ENCODE measurements at regions of chr6 and their contacts with region 1.

Region 1: GRCh38 chr6:30102970-30103874 is 9.7 kb downstream of the TRIM31 start:
- DNase-seq: peak; percentile 88
- H3K4me3 ChIP-seq: peak overlapping the region; percentile 43
- H3K4me3 Mint-ChIP-seq: peak overlapping the region; percentile 89
- H3K27ac Mint-ChIP-seq: peak overlapping the region; percentile 75
- H3K4me1 ChIP-seq: peaks cover 21% of the 10 kb centered on the region
- H3K4me1 Mint-ChIP-seq: peaks cover 27% of the 10 kb centered on the region
- H3K27me3 ChIP-seq: no peaks in the 10 kb centered on the region
- H3K27me3 Mint-ChIP-seq: no peaks in the 10 kb centered on the region
- CTCF ChIP-seq: peak; percentile 81 to 87

Region 2: DNA sequence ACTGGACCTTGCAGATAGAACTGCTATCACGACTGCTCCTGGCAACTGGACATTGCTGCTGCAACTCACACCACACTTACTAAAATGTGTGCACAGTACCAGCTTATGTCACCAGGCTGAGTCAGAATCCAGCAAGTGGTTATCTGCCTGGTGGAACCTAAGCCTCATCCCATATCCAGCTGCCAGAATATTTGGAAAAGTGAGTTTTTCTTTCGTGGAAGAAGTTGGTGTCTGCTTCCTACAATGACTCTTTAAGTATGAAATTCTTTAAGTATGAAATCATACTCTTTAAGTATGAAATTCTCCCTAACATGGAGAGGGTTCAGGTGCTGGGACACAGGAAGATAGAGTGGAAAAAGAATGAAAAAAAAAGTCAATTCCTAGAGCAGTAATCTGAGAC is 58.6 kb before region 1 on chr6:
- CTCF ChIA-PET with region 1: no interaction called
- POLR2A ChIA-PET with region 1: no interaction called
- intact Hi-C with region 1: no loop called
- DNase-seq: no peak
- H3K4me3 ChIP-seq: no peak overlapping the region
- H3K4me3 Mint-ChIP-seq: no peak overlapping the region
- H3K27ac Mint-ChIP-seq: no peak overlapping the region
- H3K4me1 ChIP-seq: no peaks in the 10 kb centered on the region
- H3K4me1 Mint-ChIP-seq: no peaks in the 10 kb centered on the region
- H3K27me3 ChIP-seq: no peaks in the 10 kb centered on the region
- H3K27me3 Mint-ChIP-seq: no peaks in the 10 kb centered on the region
- CTCF ChIP-seq: no peak

Region 3: GRCh38 chr6:30061092-30061857 is 41.9 kb before region 1 on chr6 and contains the start of gene POLR1H:
- CTCF ChIA-PET with region 1: interaction called, 10 read pairs
- POLR2A ChIA-PET with region 1: interaction called, 8 read pairs
- intact Hi-C with region 1: loop called (anchors 1 kb)
- DNase-seq: peak; percentile 93 to 94
- H3K4me3 ChIP-seq: peak within 1 kb of the TSS; percentile 77
- H3K4me3 Mint-ChIP-seq: peak within 1 kb of the TSS; percentile 88
- H3K27ac Mint-ChIP-seq: peak within 1 kb of the TSS; percentile 90
- H3K4me1 ChIP-seq: peaks cover 15% of the 10 kb centered on the region; the same call in 1 of the 2 replicates
- H3K4me1 Mint-ChIP-seq: peaks cover 15% of the 10 kb centered on the region
- H3K27me3 ChIP-seq: no peaks in the 10 kb centered on the region
- H3K27me3 Mint-ChIP-seq: no peaks in the 10 kb centered on the region
- CTCF ChIP-seq: no peak
- total RNA-seq, gene POLR1H: 26.1 and 27.6 TPM in 2 replicates

Region 4: DNA sequence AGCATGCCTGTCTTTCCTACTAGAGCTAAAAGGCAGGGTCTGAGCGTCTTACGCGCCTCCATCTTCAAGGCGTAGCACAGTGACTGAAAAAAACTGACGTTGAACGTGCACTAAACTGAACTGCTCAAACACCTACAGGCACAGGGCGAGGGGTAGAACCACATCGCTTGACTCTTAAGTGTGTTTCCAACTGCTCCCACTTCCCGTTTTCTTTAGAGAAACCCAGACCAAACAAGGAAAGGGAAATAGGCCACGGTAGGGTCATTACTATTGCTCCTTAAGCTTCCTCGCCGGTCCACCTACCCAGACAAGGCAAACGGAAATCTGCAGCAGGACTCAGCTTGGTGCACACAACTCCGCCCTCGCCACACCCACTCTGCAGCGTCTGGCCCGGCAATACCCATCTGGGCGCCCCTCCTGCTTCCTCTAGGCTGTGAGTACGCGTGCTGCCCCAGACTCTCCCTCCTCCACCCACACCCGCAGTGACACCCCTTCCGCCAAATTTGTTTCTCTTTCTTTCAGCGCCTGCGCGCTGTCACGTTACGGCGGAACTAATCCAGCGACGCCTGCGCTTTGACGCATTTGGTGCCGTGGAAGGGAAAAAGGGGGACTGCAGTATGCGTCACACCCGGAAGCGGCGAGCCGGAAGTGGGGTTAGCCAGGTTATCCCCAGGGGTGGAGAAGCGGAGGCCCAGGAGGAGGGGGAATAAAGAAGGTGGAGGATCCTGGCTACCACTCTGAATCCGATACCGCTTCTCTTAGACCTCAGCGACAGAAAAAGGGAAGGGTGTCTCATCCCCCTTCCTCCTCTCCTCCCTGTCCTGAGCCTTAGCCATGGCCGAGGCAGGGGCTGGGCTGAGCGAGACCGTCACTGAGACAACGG is 36.4 kb before region 1 on chr6 and contains the start of gene PPP1R11:
- CTCF ChIA-PET with region 1: interaction called, 10 read pairs
- POLR2A ChIA-PET with region 1: interaction called, 8 read pairs
- intact Hi-C with region 1: loop called (anchors 2 kb)
- DNase-seq: peak; percentile 96 to 98
- H3K4me3 ChIP-seq: peak within 1 kb of the TSS; percentile 44
- H3K4me3 Mint-ChIP-seq: peak within 1 kb of the TSS; percentile 78
- H3K27ac Mint-ChIP-seq: peak within 1 kb of the TSS; percentile 95
- H3K4me1 ChIP-seq: peaks cover 15% of the 10 kb centered on the region
- H3K4me1 Mint-ChIP-seq: peaks cover 27% of the 10 kb centered on the region
- H3K27me3 ChIP-seq: no peaks in the 10 kb centered on the region
- H3K27me3 Mint-ChIP-seq: no peaks in the 10 kb centered on the region
- CTCF ChIP-seq: no peak
- total RNA-seq, gene PPP1R11: 35.5 and 35.6 TPM in 2 replicates

Region 5: GRCh38 chr6:30075161-30075986 is 27.8 kb before region 1 on chr6 and contains the start of gene RNF39:
- CTCF ChIA-PET with region 1: interaction called, 4 read pairs
- POLR2A ChIA-PET with region 1: no interaction called
- intact Hi-C with region 1: loop called (anchors 2 kb)
- DNase-seq: peak in 1 of 2 experiments; percentile 51
- H3K4me3 ChIP-seq: peak within 1 kb of the TSS; percentile 51
- H3K4me3 Mint-ChIP-seq: peak within 1 kb of the TSS; percentile 80
- H3K27ac Mint-ChIP-seq: peak within 1 kb of the TSS; percentile 27
- H3K4me1 ChIP-seq: peaks cover 8% of the 10 kb centered on the region
- H3K4me1 Mint-ChIP-seq: peaks cover 12% of the 10 kb centered on the region
- H3K27me3 ChIP-seq: no peaks in the 10 kb centered on the region
- H3K27me3 Mint-ChIP-seq: peaks cover 11% of the 10 kb centered on the region
- CTCF ChIP-seq: peak in 1 of 2 experiments; percentile 62
- total RNA-seq, gene RNF39: 0.23 and 0.37 TPM in 2 replicates

Region 6: GRCh38 chr6:30130887-30131862 is 28.0 kb after region 1 on chr6:
- CTCF ChIA-PET with region 1: interaction called, 236 read pairs
- POLR2A ChIA-PET with region 1: interaction called, 4 read pairs
- intact Hi-C with region 1: loop called (anchors 1 kb)
- DNase-seq: peak; percentile 75 to 83
- H3K4me3 ChIP-seq: no peak overlapping the region
- H3K4me3 Mint-ChIP-seq: peak overlapping the region; percentile 54
- H3K27ac Mint-ChIP-seq: peak overlapping the region; percentile 44
- H3K4me1 ChIP-seq: peaks cover 21% of the 10 kb centered on the region
- H3K4me1 Mint-ChIP-seq: peaks cover 18% of the 10 kb centered on the region
- H3K27me3 ChIP-seq: no peaks in the 10 kb centered on the region
- H3K27me3 Mint-ChIP-seq: no peaks in the 10 kb centered on the region
- CTCF ChIP-seq: peak; percentile 97 to 99

Region 7: GRCh38 chr6:30163090-30163917 is 60.1 kb after region 1 on chr6 and contains the start of gene TRIM15:
- CTCF ChIA-PET with region 1: interaction called, 12 read pairs
- POLR2A ChIA-PET with region 1: no interaction called
- intact Hi-C with region 1: loop called (anchors 1 kb)
- DNase-seq: peak; percentile 85 to 91
- H3K4me3 ChIP-seq: peak within 1 kb of the TSS; percentile 89
- H3K4me3 Mint-ChIP-seq: peak within 1 kb of the TSS; percentile 92
- H3K27ac Mint-ChIP-seq: peak within 1 kb of the TSS; percentile 92
- H3K4me1 ChIP-seq: no peaks in the 10 kb centered on the region
- H3K4me1 Mint-ChIP-seq: peaks cover 14% of the 10 kb centered on the region
- H3K27me3 ChIP-seq: no peaks in the 10 kb centered on the region
- H3K27me3 Mint-ChIP-seq: no peaks in the 10 kb centered on the region
- CTCF ChIP-seq: no peak
- total RNA-seq, gene TRIM15: 5.2 and 6.9 TPM in 2 replicates

Region 8: GRCh38 chr6:30169658-30170614 is 66.7 kb after region 1 on chr6:
- CTCF ChIA-PET with region 1: no interaction called
- POLR2A ChIA-PET with region 1: no interaction called
- intact Hi-C with region 1: loop called (anchors 1 kb)
- DNase-seq: peak in 1 of 2 experiments; percentile 51
- H3K4me3 ChIP-seq: no peak overlapping the region
- H3K4me3 Mint-ChIP-seq: no peak overlapping the region
- H3K27ac Mint-ChIP-seq: no peak overlapping the region
- H3K4me1 ChIP-seq: no peaks in the 10 kb centered on the region
- H3K4me1 Mint-ChIP-seq: no peaks in the 10 kb centered on the region
- H3K27me3 ChIP-seq: no peaks in the 10 kb centered on the region
- H3K27me3 Mint-ChIP-seq: no peaks in the 10 kb centered on the region
- CTCF ChIP-seq: peak; percentile 70 to 80

Region 9: GRCh38 chr6:30331991-30332390 is 228.8 kb after region 1 on chr6:
- CTCF ChIA-PET with region 1: no interaction called
- POLR2A ChIA-PET with region 1: no interaction called
- intact Hi-C with region 1: no loop called
- DNase-seq: no peak
- H3K4me3 ChIP-seq: no peak overlapping the region
- H3K4me3 Mint-ChIP-seq: no peak overlapping the region
- H3K27ac Mint-ChIP-seq: no peak overlapping the region
- H3K4me1 ChIP-seq: 0 out of 2 replicates have a peak, but pooled peaks cover 3% of the 10 kb centered on the region
- H3K4me1 Mint-ChIP-seq: peaks cover 18% of the 10 kb centered on the region
- H3K27me3 ChIP-seq: no peaks in the 10 kb centered on the region
- H3K27me3 Mint-ChIP-seq: no peaks in the 10 kb centered on the region
- CTCF ChIP-seq: no peak

Region 10: DNA sequence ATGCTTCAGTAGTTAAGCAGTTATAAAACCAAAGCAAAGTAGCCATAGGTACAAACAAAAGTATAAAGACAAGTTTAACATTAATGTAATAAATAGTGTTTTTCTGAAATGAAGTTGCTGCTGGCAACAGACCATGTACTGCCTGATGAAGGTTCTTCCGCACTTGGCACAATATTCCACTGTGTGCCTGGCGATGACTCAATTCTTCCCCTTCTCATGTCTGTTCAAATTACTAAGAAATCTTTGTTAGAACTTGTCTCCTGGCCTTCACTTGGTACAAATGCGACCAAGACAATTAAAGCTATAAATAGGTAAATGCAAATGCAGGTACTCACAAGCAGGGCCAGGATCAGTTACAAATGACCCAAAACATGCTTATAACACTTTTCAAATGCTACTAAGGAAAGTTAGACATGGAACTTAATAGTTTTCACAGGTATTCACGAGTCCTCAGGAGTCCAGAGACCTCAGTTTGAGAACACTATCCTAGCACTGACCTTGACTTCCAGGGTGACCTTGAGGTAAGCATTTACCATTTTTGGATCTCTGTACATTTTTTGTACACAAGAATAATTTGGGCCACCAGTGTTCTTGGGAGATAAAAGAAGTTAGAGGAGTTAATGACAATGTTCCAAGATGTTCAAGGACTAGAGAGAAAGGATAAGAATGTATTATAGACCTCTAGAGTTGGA is 773.0 kb after region 1 on chr6:
- CTCF ChIA-PET with region 1: no interaction called
- POLR2A ChIA-PET with region 1: no interaction called
- intact Hi-C with region 1: no loop called
- DNase-seq: no peak
- H3K4me3 ChIP-seq: no peak overlapping the region
- H3K4me3 Mint-ChIP-seq: no peak overlapping the region
- H3K27ac Mint-ChIP-seq: no peak overlapping the region
- H3K4me1 ChIP-seq: no peaks in the 10 kb centered on the region; the same call in 1 of the 2 replicates
- H3K4me1 Mint-ChIP-seq: peaks cover under 1% of the 10 kb centered on the region
- H3K27me3 ChIP-seq: no peaks in the 10 kb centered on the region
- H3K27me3 Mint-ChIP-seq: no peaks in the 10 kb centered on the region
- CTCF ChIP-seq: no peak

Measured in Caco-2 (cell line).